ENCODE measurements at regions of chrX and their contacts with region 1.

Region 1: DNA sequence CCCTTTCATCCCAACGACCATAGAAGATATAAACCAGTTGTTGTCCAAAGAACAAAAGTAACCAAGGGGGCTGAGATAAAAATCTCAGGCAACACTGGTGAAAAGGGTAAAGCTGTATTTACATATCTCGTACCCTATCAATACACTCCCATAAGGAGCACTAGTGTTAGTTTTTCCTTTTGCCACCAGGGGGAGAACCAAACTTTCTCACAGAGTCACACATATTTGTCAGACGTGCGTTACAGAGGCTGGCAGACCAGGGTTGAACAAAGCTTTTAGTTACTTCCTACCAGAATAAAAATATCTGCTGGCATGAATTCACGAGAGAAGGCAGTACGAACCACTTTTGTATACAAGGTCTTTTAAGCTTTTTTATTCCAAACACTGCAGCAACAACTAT is 88.3 kb downstream of the AMELX start:
- DNase-seq: peak; percentile 60
- H3K4me3 ChIP-seq: no peak overlapping the region
- H3K27ac ChIP-seq: no peak overlapping the region
- H3K4me1 ChIP-seq: peaks cover 20% of the 10 kb centered on the region
- H3K27me3 ChIP-seq: no peaks in the 10 kb centered on the region

Region 2: GRCh38 chrX:11151799-11152559 is 229.5 kb before region 1 on chrX:
- in situ Hi-C with region 1: loop called (anchors 25 kb)
- DNase-seq: no peak
- H3K4me3 ChIP-seq: no peak overlapping the region
- H3K27ac ChIP-seq: no peak overlapping the region
- H3K4me1 ChIP-seq: no peaks in the 10 kb centered on the region
- H3K27me3 ChIP-seq: no peaks in the 10 kb centered on the region

Region 3: GRCh38 chrX:11499076-11500044 is 117.9 kb after region 1 on chrX:
- in situ Hi-C with region 1: loop called (anchors 25 kb)
- DNase-seq: peak; percentile 56
- H3K4me3 ChIP-seq: no peak overlapping the region
- H3K27ac ChIP-seq: 0 out of 2 replicates have a peak overlapping the region, but pooled peaks have one; percentile 15
- H3K4me1 ChIP-seq: 0 out of 2 replicates have a peak, but pooled peaks cover 10% of the 10 kb centered on the region
- H3K27me3 ChIP-seq: no peaks in the 10 kb centered on the region

Measured in GM23248 (cell line).